Activated CD8-positive, alpha-beta memory T cell treated with anti-CD3 and anti-CD28 coated beads, Interleukin-2, amount 10 ng/mL, durations not matched to agents 7 days and 5 days (primary cell): ENCODE measurements at regions of chr2 and their contacts with region 1.

Region 1: GRCh38 chr2:102473020-102473419 is at the start of gene SLC9A4:
- DNase-seq: peak; percentile 68
- ATAC-seq: peak; percentile 36
- H3K4me3 Mint-ChIP-seq: no peak within 1 kb of the TSS
- H3K27ac Mint-ChIP-seq: no peak within 1 kb of the TSS
- H3K4me1 Mint-ChIP-seq: no peaks in the 10 kb centered on the region
- H3K27me3 Mint-ChIP-seq: peaks cover 55% of the 10 kb centered on the region
- total RNA-seq, gene SLC9A4: 0.05 to 0.18 TPM

Region 2: GRCh38 chr2:102442967-102443828 is 29.8 kb before region 1 on chr2:
- CTCF ChIA-PET with region 1: no interaction called
- DNase-seq: peak; percentile 70
- ATAC-seq: peak; percentile 82
- H3K4me3 Mint-ChIP-seq: peak overlapping the region; percentile 7
- H3K27ac Mint-ChIP-seq: peak overlapping the region; percentile 68
- H3K4me1 Mint-ChIP-seq: peaks cover 10% of the 10 kb centered on the region
- H3K27me3 Mint-ChIP-seq: peaks cover 3% of the 10 kb centered on the region

Region 3: GRCh38 chr2:102487761-102488466 is 14.9 kb after region 1 on chr2:
- CTCF ChIA-PET with region 1: interaction called, 17 read pairs
- DNase-seq: no peak
- ATAC-seq: no peak
- H3K4me3 Mint-ChIP-seq: no peak overlapping the region
- H3K27ac Mint-ChIP-seq: no peak overlapping the region
- H3K4me1 Mint-ChIP-seq: peaks cover 11% of the 10 kb centered on the region
- H3K27me3 Mint-ChIP-seq: peaks cover 15% of the 10 kb centered on the region

Region 4: GRCh38 chr2:102615622-102616436 is 142.8 kb after region 1 on chr2:
- CTCF ChIA-PET with region 1: interaction called, 20 read pairs
- DNase-seq: peak; percentile 63
- ATAC-seq: peak; percentile 79
- H3K4me3 Mint-ChIP-seq: no peak overlapping the region
- H3K27ac Mint-ChIP-seq: no peak overlapping the region
- H3K4me1 Mint-ChIP-seq: peaks cover 11% of the 10 kb centered on the region
- H3K27me3 Mint-ChIP-seq: peaks cover 58% of the 10 kb centered on the region

Region 5: GRCh38 chr2:102891296-102891695 is 418.3 kb after region 1 on chr2:
- CTCF ChIA-PET with region 1: no interaction called
- DNase-seq: no peak
- ATAC-seq: no peak
- H3K4me3 Mint-ChIP-seq: no peak overlapping the region
- H3K27ac Mint-ChIP-seq: no peak overlapping the region
- H3K4me1 Mint-ChIP-seq: no peaks in the 10 kb centered on the region
- H3K27me3 Mint-ChIP-seq: no peaks in the 10 kb centered on the region